ENCODE measurements at regions of chr4 and their contacts with region 1.

Region 1: GRCh38 chr4:165112368-165113139 is at the start of gene TMEM192:
- DNase-seq: peak; percentile 95 to 96
- H3K4me3 ChIP-seq: peak within 1 kb of the TSS; percentile 89
- H3K4me3 Mint-ChIP-seq: peak within 1 kb of the TSS; percentile 96
- H3K27ac Mint-ChIP-seq: peak within 1 kb of the TSS; percentile 90
- H3K4me1 ChIP-seq: peaks cover 5% of the 10 kb centered on the region
- H3K4me1 Mint-ChIP-seq: peaks cover 9% of the 10 kb centered on the region
- H3K27me3 ChIP-seq: no peaks in the 10 kb centered on the region
- H3K27me3 Mint-ChIP-seq: no peaks in the 10 kb centered on the region
- CTCF ChIP-seq: peak in 1 of 2 experiments; percentile 18
- total RNA-seq, gene TMEM192: 18.6 and 19.4 TPM in 2 replicates

Region 2: GRCh38 chr4:164154416-164154815 is 958.1 kb before region 1 on chr4:
- CTCF ChIA-PET with region 1: no interaction called
- POLR2A ChIA-PET with region 1: interaction called, 10 read pairs
- intact Hi-C with region 1: no loop called
- DNase-seq: no peak
- H3K4me3 ChIP-seq: no peak overlapping the region
- H3K4me3 Mint-ChIP-seq: no peak overlapping the region
- H3K27ac Mint-ChIP-seq: no peak overlapping the region
- H3K4me1 ChIP-seq: peaks cover 21% of the 10 kb centered on the region
- H3K4me1 Mint-ChIP-seq: peaks cover 20% of the 10 kb centered on the region
- H3K27me3 ChIP-seq: no peaks in the 10 kb centered on the region
- H3K27me3 Mint-ChIP-seq: no peaks in the 10 kb centered on the region
- CTCF ChIP-seq: no peak

Region 3: GRCh38 chr4:164876700-164877324 is 235.7 kb before region 1 on chr4 and contains the start of gene APELA:
- CTCF ChIA-PET with region 1: interaction called, 3 read pairs
- POLR2A ChIA-PET with region 1: interaction called, 4 read pairs
- intact Hi-C with region 1: loop called (anchors 5 kb)
- DNase-seq: peak; percentile 71 to 74
- H3K4me3 ChIP-seq: peak within 1 kb of the TSS; percentile 26
- H3K4me3 Mint-ChIP-seq: peak within 1 kb of the TSS; percentile 74
- H3K27ac Mint-ChIP-seq: peak within 1 kb of the TSS; percentile 81
- H3K4me1 ChIP-seq: peaks cover 62% of the 10 kb centered on the region
- H3K4me1 Mint-ChIP-seq: peaks cover 26% of the 10 kb centered on the region
- H3K27me3 ChIP-seq: no peaks in the 10 kb centered on the region
- H3K27me3 Mint-ChIP-seq: no peaks in the 10 kb centered on the region
- CTCF ChIP-seq: no peak
- total RNA-seq, gene APELA: 30.6 and 34.8 TPM in 2 replicates

Region 4: DNA sequence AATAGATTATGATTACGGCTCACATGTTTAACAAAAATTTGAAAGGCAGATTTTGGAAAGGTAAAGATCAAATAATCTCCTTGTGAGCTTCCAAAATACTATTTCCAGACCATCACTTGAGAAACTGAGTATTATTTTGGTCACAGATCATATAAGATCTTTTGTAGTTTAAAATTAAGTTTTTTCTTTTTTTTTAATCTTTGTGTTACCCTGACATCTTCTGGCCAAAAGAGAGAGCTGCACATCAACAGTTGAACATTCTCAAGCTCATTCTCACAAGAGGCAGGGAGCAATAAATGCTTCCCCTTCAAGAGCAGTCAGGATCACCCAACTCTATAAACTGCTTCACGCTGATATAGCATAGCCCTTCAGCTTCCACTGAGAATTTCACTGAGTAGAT is 15.8 kb before region 1 on chr4:
- CTCF ChIA-PET with region 1: interaction called, 19 read pairs
- POLR2A ChIA-PET with region 1: no interaction called
- intact Hi-C with region 1: no loop called
- DNase-seq: peak in 1 of 2 experiments; percentile 18
- H3K4me3 ChIP-seq: no peak overlapping the region
- H3K4me3 Mint-ChIP-seq: no peak overlapping the region
- H3K27ac Mint-ChIP-seq: no peak overlapping the region
- H3K4me1 ChIP-seq: no peaks in the 10 kb centered on the region
- H3K4me1 Mint-ChIP-seq: no peaks in the 10 kb centered on the region
- H3K27me3 ChIP-seq: no peaks in the 10 kb centered on the region
- H3K27me3 Mint-ChIP-seq: no peaks in the 10 kb centered on the region
- CTCF ChIP-seq: peak; percentile 54 to 63

Region 5: DNA sequence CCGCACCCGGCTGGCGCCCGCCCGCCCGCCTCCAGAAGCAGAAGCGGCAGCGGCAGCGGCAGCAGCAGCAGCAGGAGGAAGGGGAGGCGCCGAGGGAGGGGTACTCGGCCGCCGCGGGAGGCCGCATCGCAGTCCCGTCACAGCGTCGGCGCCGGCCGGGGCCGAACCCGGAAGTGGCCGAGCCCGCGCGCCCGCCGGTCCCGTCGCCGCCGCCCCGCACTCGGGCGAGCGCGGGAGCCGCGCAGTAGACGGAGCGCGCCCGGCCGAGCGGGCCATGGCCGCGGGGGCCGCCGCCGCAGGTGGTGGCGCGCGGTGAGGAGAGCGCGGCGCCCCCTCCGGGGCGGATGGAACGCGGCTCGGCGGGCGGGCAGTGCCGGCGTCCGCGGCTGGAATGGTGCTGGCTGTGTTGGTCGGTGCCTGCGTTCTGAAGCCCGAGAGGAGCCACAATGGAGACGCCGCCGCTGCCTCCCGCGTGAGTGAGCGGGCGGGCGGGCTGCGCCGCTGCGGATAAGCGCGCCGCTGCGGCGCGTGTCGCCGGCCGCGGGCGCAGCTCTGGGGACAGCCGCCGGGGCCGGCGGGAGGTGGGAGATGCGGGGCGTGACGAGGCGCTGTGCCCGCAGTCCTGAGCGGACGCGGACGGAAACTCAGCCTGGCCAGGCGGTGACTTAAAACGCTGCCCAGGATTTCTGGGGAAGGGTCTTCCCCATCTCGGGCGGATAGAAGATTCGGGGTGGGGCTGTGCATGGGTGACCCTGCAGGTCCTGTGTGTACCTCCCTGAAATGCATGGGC is 95.1 kb after region 1 on chr4 and contains the start of gene KLHL2:
- CTCF ChIA-PET with region 1: interaction called, 5 read pairs
- POLR2A ChIA-PET with region 1: interaction called, 3 read pairs
- intact Hi-C with region 1: loop called (anchors 1 kb)
- DNase-seq: peak; percentile 74 to 83
- H3K4me3 ChIP-seq: peak within 1 kb of the TSS; percentile 85
- H3K4me3 Mint-ChIP-seq: peak within 1 kb of the TSS; percentile 74
- H3K27ac Mint-ChIP-seq: peak within 1 kb of the TSS; percentile 49
- H3K4me1 ChIP-seq: peaks cover 25% of the 10 kb centered on the region
- H3K4me1 Mint-ChIP-seq: peaks cover 27% of the 10 kb centered on the region
- H3K27me3 ChIP-seq: no peaks in the 10 kb centered on the region
- H3K27me3 Mint-ChIP-seq: no peaks in the 10 kb centered on the region
- CTCF ChIP-seq: no peak
- total RNA-seq, gene KLHL2: 14.5 and 15.9 TPM in 2 replicates

Region 6: DNA sequence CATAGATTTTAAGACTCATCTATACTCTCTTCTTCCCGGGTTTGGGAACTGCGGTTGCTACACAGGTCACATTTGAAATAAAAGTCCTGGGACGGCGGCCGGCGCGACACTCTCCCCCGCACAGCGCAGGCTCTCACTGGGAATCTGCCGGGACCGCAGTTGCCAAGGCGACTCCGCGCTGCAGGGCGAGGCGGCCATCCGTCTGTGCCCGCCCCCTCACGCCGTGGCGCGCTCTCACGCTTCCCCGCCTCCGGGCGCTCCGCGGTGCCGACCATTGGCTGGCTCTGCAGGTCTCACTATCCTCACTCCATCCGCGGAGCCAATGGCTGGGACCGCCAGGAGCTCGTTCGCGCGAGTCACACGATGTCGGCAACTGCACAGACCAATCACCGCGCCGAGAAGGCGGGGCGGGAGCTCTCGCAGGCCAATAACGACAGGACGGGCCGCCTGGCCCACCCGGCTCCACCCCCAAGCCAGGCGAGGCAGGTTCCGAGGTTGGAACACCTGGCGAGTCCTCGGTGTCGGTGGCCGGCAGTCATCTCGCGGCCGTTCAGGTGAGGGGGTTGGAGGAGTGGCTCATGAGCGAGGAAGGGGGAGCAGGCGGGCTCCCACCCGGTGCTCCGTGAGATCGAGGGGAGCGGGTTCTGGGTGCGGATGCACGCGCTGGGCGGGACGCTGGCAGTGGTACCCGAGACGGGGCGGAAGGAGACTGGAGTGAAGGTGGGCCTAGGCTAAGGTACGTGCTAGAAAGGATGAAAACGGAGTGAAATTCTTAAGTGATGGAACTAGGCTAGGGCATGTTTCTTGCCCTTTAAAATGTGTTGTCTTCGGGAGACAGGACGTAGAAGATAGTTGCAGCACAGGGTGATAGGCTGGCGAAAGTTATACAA is 214.9 kb after region 1 on chr4 and contains the start of gene MSMO1:
- CTCF ChIA-PET with region 1: interaction called, 5 read pairs
- POLR2A ChIA-PET with region 1: interaction called, 24 read pairs
- intact Hi-C with region 1: loop called (anchors 1 kb)
- DNase-seq: peak; percentile 98 to 99
- H3K4me3 ChIP-seq: peak within 1 kb of the TSS; percentile 79
- H3K4me3 Mint-ChIP-seq: no peak within 1 kb of the TSS
- H3K27ac Mint-ChIP-seq: no peak within 1 kb of the TSS
- H3K4me1 ChIP-seq: peaks cover 29% of the 10 kb centered on the region
- H3K4me1 Mint-ChIP-seq: peaks cover 30% of the 10 kb centered on the region
- H3K27me3 ChIP-seq: no peaks in the 10 kb centered on the region
- H3K27me3 Mint-ChIP-seq: no peaks in the 10 kb centered on the region
- CTCF ChIP-seq: no peak
- total RNA-seq, gene MSMO1: 80.5 and 91.1 TPM in 2 replicates

Measured in Caco-2 (cell line).